CD4-positive, alpha-beta memory T cell (primary cell): ENCODE measurements at regions of chr15 and their contacts with region 1.

Region 1: DNA sequence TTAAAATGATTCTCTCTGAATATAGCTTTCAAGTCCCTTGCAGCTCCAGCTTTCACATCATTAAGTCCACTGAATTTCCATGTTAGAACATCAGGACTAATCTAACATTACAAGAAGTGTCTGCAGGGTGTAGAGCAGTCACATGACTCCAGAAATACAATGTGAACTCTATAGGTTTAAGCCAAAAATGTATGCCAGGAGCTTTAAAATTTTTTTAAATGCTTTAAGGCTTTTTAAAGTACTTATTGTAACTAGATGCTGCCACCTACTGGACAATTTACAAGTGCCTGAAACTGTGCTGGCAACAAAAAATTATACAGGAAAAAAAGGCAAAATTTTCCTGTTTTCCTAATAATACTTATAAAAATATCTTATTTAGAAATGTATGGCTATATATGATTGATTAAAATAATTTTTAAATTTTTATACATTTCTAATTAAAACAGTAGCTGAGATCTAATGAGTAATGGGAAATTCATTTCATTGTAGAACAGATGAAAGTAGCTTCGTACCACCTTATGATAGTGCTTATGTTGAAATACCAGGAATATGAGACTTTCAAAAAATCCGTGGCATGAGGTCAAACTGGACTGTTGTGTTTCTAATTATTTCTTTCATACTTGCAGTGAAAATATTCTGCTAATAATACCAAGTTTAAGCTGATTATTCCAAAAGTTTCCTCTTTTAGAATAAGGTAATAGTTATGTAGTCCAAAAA is 25.7 kb downstream of the FSIP1 start:
- DNase-seq: peak in 4 of 5 donors; percentile 50 to 56 (median 54)
- H3K4me3 ChIP-seq: no peak overlapping the region
- H3K4me3 Mint-ChIP-seq: no peak overlapping the region
- H3K27ac ChIP-seq: no peak overlapping the region
- H3K27ac Mint-ChIP-seq: no peak overlapping the region
- H3K4me1 ChIP-seq: no peaks in the 10 kb centered on the region
- H3K4me1 Mint-ChIP-seq: no peaks in the 10 kb centered on the region
- H3K27me3 ChIP-seq: no peaks in the 10 kb centered on the region
- H3K27me3 Mint-ChIP-seq: peaks cover 0 to 3% of the 10 kb centered on the region in 2 donors

Region 2: DNA sequence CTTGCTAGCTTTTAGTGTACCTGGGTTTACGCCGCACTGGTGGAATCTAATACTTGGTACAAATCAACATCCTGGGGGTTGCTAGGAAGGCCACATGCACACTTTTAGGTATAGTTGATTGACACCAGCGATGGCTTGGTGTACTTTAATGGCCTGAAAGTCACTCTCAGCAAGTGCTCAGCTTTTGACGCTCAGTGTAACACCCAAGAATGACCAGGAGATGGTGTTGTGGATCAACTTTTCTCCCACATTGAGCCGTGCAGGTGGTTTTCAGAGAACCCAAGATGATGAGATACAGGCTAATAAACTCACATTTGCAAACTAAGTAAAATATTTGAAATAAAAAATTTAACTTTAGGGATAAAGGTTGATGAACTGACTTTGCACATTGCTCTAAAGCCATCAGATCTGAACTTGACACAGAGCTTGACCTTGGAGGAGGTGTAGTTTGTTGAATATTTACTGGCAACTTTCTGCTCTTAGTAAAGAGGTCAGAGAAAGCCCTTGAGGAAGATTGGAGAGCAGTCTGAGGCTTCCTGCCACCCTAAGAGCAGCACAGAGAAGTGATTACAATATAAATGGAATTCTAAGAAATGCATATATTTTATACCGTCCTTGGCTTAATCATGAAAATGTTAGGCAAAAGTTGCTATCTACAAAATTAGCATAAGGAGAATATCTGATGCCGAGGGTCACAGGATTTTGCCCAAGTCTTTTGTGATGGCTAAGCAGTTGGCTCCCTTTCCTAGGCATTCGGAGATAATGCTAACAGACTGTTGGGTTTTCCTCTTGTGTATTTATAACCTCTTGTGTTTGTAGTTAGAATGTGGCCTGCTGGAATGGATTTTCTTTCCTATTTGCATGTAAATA is 1048.9 kb before region 1 on chr15:
- CTCF ChIA-PET with region 1: interaction called, 14 read pairs
- POLR2A ChIA-PET with region 1: no interaction called
- intact Hi-C with region 1: loop called (anchors 1 kb)
- DNase-seq: peak; percentile 37 to 56 (median 53)
- H3K4me3 ChIP-seq: no peak overlapping the region
- H3K4me3 Mint-ChIP-seq: peak overlapping the region in 2 of 8 donors; percentile 24 to 38
- H3K27ac ChIP-seq: no peak overlapping the region
- H3K27ac Mint-ChIP-seq: no peak overlapping the region
- H3K4me1 ChIP-seq: peaks cover 9% of the 10 kb centered on the region
- H3K4me1 Mint-ChIP-seq: peaks cover 0 to 3% (median 0%) of the 10 kb centered on the region in 4 donors
- H3K27me3 ChIP-seq: no peaks in the 10 kb centered on the region
- H3K27me3 Mint-ChIP-seq: peaks cover 0 to 2% of the 10 kb centered on the region in 2 donors

Region 3: GRCh38 chr15:39580117-39580484 is 176.9 kb before region 1 on chr15:
- CTCF ChIA-PET with region 1: interaction called, 83 read pairs
- POLR2A ChIA-PET with region 1: interaction called, 7 read pairs
- intact Hi-C with region 1: loop called (anchors 1 kb)
- DNase-seq: peak; percentile 76 to 84 (median 84)
- H3K4me3 ChIP-seq: peak overlapping the region in 1 of 2 donors; percentile 56
- H3K4me3 Mint-ChIP-seq: peak overlapping the region; percentile 63 to 90 (median 75)
- H3K27ac ChIP-seq: no peak overlapping the region
- H3K27ac Mint-ChIP-seq: peak overlapping the region in 2 of 7 donors; percentile 35 to 69
- H3K4me1 ChIP-seq: peaks cover 14% of the 10 kb centered on the region
- H3K4me1 Mint-ChIP-seq: peaks cover 9 to 53% (median 19%) of the 10 kb centered on the region in 4 donors
- H3K27me3 ChIP-seq: peaks cover 2% of the 10 kb centered on the region
- H3K27me3 Mint-ChIP-seq: peaks cover 15 to 32% of the 10 kb centered on the region in 2 donors

Region 4: GRCh38 chr15:39624806-39625205 is 132.2 kb before region 1 on chr15:
- CTCF ChIA-PET with region 1: interaction called, 30 read pairs
- POLR2A ChIA-PET with region 1: interaction called, 21 read pairs
- intact Hi-C with region 1: no loop called
- DNase-seq: peak; percentile 78 to 90 (median 86)
- H3K4me3 ChIP-seq: no peak overlapping the region
- H3K4me3 Mint-ChIP-seq: peak overlapping the region; percentile 76 to 91 (median 82)
- H3K27ac ChIP-seq: peak overlapping the region; percentile 70
- H3K27ac Mint-ChIP-seq: peak overlapping the region; percentile 98 to 100 (median 99)
- H3K4me1 ChIP-seq: peaks cover 80% of the 10 kb centered on the region
- H3K4me1 Mint-ChIP-seq: peaks cover 66 to 89% (median 80%) of the 10 kb centered on the region in 4 donors
- H3K27me3 ChIP-seq: no peaks in the 10 kb centered on the region
- H3K27me3 Mint-ChIP-seq: no peaks in the 10 kb centered on the region

Region 5: GRCh38 chr15:39706206-39706605 is 50.8 kb before region 1 on chr15:
- CTCF ChIA-PET with region 1: interaction called, 13 read pairs
- POLR2A ChIA-PET with region 1: no interaction called
- intact Hi-C with region 1: no loop called
- DNase-seq: no peak
- H3K4me3 ChIP-seq: no peak overlapping the region
- H3K4me3 Mint-ChIP-seq: no peak overlapping the region
- H3K27ac ChIP-seq: no peak overlapping the region
- H3K27ac Mint-ChIP-seq: no peak overlapping the region
- H3K4me1 ChIP-seq: no peaks in the 10 kb centered on the region
- H3K4me1 Mint-ChIP-seq: no peaks in the 10 kb centered on the region
- H3K27me3 ChIP-seq: no peaks in the 10 kb centered on the region
- H3K27me3 Mint-ChIP-seq: no peaks in the 10 kb centered on the region